ENCODE measurements at regions of chr12 and their contacts with region 1.

Region 1: GRCh38 chr12:94603434-94604365 is 46.7 kb downstream of the TMCC3 start:
- DNase-seq: peak; percentile 22
- ATAC-seq: peak; percentile 91
- H3K4me3 ChIP-seq: no peak overlapping the region
- H3K27ac ChIP-seq: no peak overlapping the region
- H3K4me1 ChIP-seq: peaks cover 0 to 11% of the 10 kb centered on the region in 2 experiments; a peak in 1 of 4 replicates
- H3K27me3 ChIP-seq: no peaks in the 10 kb centered on the region
- CTCF ChIP-seq: peak; percentile 71 to 88 (median 87)
- POLR2A ChIP-seq: no peak
- RAD21 ChIP-seq: peak; percentile 67

Region 2: DNA sequence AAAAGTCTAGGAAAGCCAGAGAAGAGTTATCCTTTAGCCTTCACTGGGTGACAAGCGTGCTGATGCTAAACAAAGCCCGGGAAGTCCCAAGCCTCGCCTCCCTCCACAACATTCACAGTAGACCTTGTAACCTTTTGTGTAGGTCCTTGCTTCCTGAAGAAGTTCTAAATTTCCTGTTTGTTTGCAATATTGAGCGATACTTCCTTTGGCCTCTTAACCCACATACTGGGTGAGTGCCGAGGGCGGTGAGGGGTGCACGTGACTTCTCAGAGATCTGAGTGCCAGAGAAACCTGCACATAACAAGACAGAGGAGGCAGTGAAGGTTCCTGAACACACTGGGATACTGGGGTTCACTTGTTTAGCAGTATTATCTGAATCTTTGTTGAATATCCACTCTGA is 321.0 kb before region 1 on chr12:
- CTCF ChIA-PET with region 1: no interaction called
- POLR2A ChIA-PET with region 1: no interaction called
- RAD21 ChIA-PET with region 1: no interaction called
- intact Hi-C with region 1: no loop called
- DNase-seq: no peak
- ATAC-seq: no peak
- H3K4me3 ChIP-seq: no peak overlapping the region
- H3K27ac ChIP-seq: no peak overlapping the region
- H3K4me1 ChIP-seq: no peaks in the 10 kb centered on the region
- H3K27me3 ChIP-seq: no peaks in the 10 kb centered on the region
- CTCF ChIP-seq: no peak
- POLR2A ChIP-seq: no peak
- RAD21 ChIP-seq: no peak

Region 3: DNA sequence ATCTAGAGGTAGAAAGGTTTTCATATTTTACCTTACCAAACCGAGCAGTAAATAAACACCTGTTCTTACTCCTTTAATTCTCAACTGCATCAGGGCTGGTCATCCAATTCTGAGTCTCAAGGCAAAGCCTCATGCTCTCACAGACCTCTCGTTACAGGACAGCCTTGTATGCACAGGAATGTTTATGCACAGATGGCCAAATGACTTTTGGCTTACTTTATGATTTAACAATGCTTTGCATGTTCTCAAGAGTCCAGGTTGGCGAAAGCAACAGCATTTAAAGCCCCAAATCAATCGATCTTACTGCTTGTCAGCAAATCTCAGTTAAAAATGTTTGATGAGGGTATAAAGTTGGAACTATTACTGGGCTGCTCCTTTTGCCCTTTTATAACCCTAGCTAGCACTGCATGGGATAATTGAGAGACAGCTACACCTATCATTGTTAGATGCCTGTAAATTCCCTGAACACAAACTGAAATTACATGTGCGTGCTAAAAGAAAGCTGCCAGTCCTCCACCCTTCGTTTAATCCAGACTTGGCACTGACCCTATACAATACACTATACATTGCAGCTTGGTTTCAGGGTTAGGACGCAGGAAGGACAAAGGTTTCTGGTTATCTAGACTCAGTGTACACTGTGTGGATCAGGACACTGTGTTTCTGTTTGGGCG is 17.0 kb before region 1 on chr12:
- CTCF ChIA-PET with region 1: no interaction called
- POLR2A ChIA-PET with region 1: no interaction called
- RAD21 ChIA-PET with region 1: no interaction called
- intact Hi-C with region 1: no loop called
- DNase-seq: no peak
- ATAC-seq: no peak
- H3K4me3 ChIP-seq: no peak overlapping the region
- H3K27ac ChIP-seq: no peak overlapping the region
- H3K4me1 ChIP-seq: peaks cover 3 to 16% of the 10 kb centered on the region in 2 experiments; a peak in 2 of 4 replicates
- H3K27me3 ChIP-seq: no peaks in the 10 kb centered on the region
- CTCF ChIP-seq: no peak
- POLR2A ChIP-seq: no peak
- RAD21 ChIP-seq: no peak

Region 4: DNA sequence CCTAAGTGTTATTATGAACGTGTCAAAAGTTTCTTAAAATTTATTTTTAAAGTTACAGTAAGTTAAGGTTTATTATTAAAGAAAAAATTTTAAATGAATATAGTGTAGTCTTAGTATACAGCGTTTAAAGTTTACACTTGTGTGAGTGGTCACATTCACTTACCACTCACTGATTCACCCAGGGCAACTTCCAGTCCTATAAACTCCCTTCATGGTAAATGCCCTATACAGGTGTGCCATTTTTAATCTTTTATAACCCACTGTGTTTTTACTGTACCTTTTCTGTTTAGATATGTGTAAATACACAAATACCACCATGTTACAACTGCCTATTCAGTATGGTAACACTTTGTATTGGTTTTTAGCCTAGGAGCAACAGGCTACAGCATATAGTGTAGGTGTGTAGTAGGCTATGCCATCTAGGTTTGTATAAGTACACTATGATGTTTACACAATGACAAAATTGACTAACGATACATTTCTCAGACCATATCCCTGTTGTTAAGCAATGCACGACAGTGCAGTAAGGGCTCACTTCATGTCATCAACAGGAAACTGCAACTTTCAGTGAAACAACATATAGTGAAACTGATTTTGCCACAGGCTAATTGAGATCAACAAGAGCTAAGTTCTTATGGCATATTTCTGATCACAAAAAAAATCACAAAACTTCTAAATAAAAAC is 158.7 kb after region 1 on chr12:
- CTCF ChIA-PET with region 1: no interaction called
- POLR2A ChIA-PET with region 1: no interaction called
- RAD21 ChIA-PET with region 1: no interaction called
- intact Hi-C with region 1: loop called (anchors 10 kb)
- DNase-seq: no peak
- ATAC-seq: no peak
- H3K4me3 ChIP-seq: no peak overlapping the region
- H3K27ac ChIP-seq: no peak overlapping the region
- H3K4me1 ChIP-seq: peaks cover 0 to 9% of the 10 kb centered on the region in 2 experiments; a peak in 2 of 4 replicates
- H3K27me3 ChIP-seq: no peaks in the 10 kb centered on the region
- CTCF ChIP-seq: no peak
- POLR2A ChIP-seq: no peak
- RAD21 ChIP-seq: no peak

Measured in HCT116 (cell line).